ENCODE measurements at regions of chr11 and their contacts with region 1.

Region 1: GRCh38 chr11:11931461-11932055 is 76.9 kb downstream of the DKK3 start:
- DNase-seq: peak; percentile 80
- H3K4me3 Mint-ChIP-seq: no peak overlapping the region
- H3K27ac Mint-ChIP-seq: no peak overlapping the region
- H3K4me1 Mint-ChIP-seq: no peaks in the 10 kb centered on the region
- H3K27me3 Mint-ChIP-seq: no peaks in the 10 kb centered on the region
- CTCF ChIP-seq: peak; percentile 80

Region 2: GRCh38 chr11:11621573-11622319 is 309.8 kb before region 1 on chr11 and contains the start of gene GALNT18:
- CTCF ChIA-PET with region 1: no interaction called
- POLR2A ChIA-PET with region 1: no interaction called
- intact Hi-C with region 1: no loop called
- DNase-seq: peak; percentile 95
- H3K4me3 Mint-ChIP-seq: peak within 1 kb of the TSS; percentile 90
- H3K27ac Mint-ChIP-seq: peak within 1 kb of the TSS; percentile 51
- H3K4me1 Mint-ChIP-seq: peaks cover 34% of the 10 kb centered on the region
- H3K27me3 Mint-ChIP-seq: no peaks in the 10 kb centered on the region
- CTCF ChIP-seq: peak; percentile 29
- total RNA-seq, gene GALNT18: 9.0 and 14.1 TPM in 2 replicates

Region 3: DNA sequence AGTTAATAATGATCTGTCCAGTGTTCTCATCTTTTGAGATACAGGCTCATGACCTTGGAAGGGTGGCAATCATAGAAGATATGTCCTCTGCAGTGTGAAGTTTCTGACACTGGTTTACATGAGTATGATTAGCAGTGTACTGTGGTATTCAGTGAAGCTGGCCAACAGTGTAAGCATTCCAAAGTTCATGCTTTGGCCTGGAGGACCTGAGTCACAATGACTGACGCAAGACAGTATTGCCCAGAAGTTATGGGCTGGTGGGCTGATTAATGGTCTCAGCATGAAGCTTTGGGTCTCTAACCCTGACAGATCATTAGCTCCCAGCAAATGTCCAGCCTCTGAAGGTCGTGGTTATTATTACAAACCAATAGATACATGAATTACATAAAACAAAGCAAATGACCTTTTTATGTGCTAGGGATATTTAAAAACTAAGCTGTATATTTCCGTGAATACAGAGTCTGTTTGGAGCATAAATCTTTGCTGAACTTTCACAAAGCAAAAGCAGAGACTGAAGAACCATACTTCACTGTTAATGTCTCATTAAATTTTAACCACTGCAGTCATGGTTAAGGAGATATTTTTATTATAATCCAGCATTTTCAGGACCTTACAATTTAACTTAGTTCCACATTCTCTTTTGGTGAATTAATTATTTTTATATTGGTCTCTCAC is 118.1 kb before region 1 on chr11:
- CTCF ChIA-PET with region 1: no interaction called
- POLR2A ChIA-PET with region 1: no interaction called
- intact Hi-C with region 1: no loop called
- DNase-seq: peak; percentile 80
- H3K4me3 Mint-ChIP-seq: no peak overlapping the region
- H3K27ac Mint-ChIP-seq: peak overlapping the region; percentile 57
- H3K4me1 Mint-ChIP-seq: peaks cover 14% of the 10 kb centered on the region
- H3K27me3 Mint-ChIP-seq: no peaks in the 10 kb centered on the region
- CTCF ChIP-seq: no peak

Region 4: GRCh38 chr11:11946180-11946579 is 14.6 kb after region 1 on chr11:
- CTCF ChIA-PET with region 1: interaction called, 19 read pairs
- POLR2A ChIA-PET with region 1: interaction called, 4 read pairs
- intact Hi-C with region 1: no loop called
- DNase-seq: no peak
- H3K4me3 Mint-ChIP-seq: no peak overlapping the region
- H3K27ac Mint-ChIP-seq: no peak overlapping the region
- H3K4me1 Mint-ChIP-seq: no peaks in the 10 kb centered on the region
- H3K27me3 Mint-ChIP-seq: no peaks in the 10 kb centered on the region
- CTCF ChIP-seq: no peak

Region 5: DNA sequence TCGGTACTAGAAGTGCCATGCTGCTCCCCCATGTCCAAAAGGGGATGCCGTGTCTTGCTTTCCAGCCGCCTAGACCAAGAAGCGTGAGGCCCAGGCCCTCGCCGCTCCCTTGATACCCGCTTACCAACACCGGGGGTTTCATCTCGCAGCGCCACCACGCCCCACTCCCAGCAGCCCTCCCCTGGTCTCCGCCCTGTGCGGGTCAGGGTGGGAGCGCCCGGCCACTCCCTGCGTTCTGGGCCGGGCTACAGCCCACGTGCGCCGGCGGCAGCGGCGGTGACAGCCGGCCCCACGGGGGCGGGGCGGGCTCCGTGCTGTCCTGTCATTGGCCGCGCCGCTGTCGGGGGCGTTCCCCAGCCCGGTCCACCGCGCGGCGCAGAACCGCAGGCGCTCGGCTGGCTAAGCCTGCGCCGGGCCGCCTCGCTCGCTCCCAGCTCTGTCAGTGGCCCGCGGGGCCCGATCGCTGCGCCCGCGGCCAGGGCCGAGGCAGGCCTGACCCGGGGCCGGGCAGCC is 178.7 kb after region 1 on chr11 and contains the start of gene MICAL2:
- CTCF ChIA-PET with region 1: no interaction called
- POLR2A ChIA-PET with region 1: no interaction called
- intact Hi-C with region 1: loop called (anchors 5 kb)
- DNase-seq: peak; percentile 88
- H3K4me3 Mint-ChIP-seq: peak within 1 kb of the TSS; percentile 79
- H3K27ac Mint-ChIP-seq: peak within 1 kb of the TSS; percentile 61
- H3K4me1 Mint-ChIP-seq: peaks cover 29% of the 10 kb centered on the region
- H3K27me3 Mint-ChIP-seq: no peaks in the 10 kb centered on the region
- CTCF ChIP-seq: no peak
- total RNA-seq, gene MICAL2: 151 and 154 TPM in 2 replicates